ENCODE measurements at regions of chr19 and their contacts with region 1.

Region 1: DNA sequence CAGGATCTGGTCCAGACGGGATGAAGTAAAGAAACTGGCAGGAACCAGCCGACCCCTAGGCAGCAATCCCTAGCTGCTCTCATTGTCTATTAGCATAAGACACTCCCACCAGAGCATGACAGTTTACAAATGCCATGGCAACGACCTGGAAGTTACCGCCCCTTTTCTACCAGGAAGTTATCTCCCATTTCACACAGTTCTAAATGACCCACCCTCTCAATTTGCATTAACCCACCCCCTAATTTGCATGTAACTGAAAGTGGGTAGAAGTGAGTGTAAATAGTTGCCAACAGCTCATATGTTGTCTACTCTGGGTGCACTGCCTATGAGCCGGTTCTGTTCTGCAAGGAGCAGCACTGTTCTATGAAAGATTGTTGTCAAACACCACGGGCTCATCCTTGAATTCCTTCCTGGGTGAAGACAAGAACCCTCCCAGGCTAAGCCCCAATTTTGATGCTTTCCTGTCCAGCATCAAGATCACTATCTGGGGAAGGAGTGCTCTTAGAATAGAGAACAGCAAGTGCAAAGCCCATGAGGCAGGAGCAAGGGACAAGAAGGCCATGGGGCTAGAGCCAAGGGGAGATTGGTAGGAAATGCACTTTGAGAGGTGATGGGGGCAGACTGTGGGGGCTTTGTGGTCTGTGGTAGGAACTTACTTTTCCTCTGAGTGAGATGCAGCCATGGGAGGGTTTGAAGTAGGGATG is 13.9 kb upstream of the FBXO27 start:
- DNase-seq: no peak
- H3K4me3 ChIP-seq: no peak overlapping the region
- CTCF ChIP-seq: no peak
- POLR2A ChIP-seq: no peak

Region 2: GRCh38 chr19:38964738-38965137 is 81.5 kb before region 1 on chr19:
- intact Hi-C with region 1: loop called (anchors 10 kb)
- DNase-seq: no peak
- H3K4me3 ChIP-seq: no peak overlapping the region
- CTCF ChIP-seq: no peak
- POLR2A ChIP-seq: no peak

Region 3: DNA sequence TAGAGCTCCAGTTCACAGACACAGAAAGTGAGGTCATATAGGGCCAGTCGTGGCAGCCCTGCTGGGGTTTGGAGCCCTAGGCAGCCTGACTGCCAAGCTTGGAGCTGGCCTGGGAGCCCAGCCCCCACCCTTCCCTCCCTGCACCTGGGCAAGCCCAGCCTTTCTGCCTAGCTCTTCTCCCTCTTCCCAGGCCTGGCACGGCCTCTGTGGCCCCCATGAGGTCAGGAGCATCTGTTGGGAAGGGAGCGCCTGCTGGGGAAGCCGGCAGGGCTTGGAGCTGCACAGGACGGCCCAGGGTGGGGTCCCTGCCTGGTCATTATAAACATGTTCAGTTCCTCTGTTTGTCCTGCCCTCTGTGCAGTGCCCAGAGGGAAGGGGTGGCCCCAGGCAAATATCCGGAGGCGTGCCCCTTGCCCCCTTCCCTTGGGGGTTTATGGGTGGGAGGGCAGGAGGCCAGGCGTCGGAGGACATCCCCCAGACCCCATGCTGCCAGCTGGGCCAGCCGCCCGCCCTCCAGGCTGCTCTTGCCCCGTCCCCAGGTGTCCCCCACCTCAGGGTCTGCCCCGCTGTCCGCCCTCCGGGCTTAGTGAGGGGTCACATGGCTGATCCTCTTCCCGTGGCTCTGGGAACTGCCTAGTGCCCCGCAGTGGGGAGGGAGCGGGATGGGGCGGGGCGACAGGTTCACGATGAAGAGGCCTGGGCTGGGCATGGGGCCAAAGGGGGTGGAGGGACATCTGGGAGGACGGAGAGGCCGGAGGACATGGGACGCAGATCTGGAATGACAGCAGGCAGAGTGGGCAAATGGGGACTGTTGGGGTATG is 120.5 kb after region 1 on chr19:
- intact Hi-C with region 1: no loop called
- DNase-seq: peak; percentile 39 to 95
- H3K4me3 ChIP-seq: no peak overlapping the region
- CTCF ChIP-seq: no peak
- POLR2A ChIP-seq: no peak